A673 (cell line): ENCODE measurements at regions of chr11 and their contacts with region 1.

Region 1: DNA sequence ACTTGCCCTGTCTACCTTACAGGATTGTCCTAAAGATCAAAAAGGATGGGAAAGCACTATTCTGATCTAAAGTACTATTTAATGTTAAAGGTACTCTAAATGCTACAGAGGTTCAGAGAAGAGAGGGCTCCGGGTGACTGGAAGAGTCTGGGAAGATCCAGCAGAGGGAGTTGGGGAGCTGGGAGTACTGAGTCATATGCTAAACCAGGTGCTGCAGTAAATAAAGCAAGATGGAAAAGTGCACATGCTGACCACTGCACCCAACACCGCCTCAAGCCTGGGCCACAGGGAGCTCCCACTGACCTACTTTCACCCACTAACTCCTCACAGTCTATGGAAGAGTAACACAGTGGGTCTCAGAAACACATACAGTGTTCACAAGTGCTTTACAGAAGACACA is 49.3 kb downstream of the WT1 start:
- DNase-seq: peak; percentile 93
- H3K4me3 ChIP-seq: no peak overlapping the region
- H3K27ac ChIP-seq: peak overlapping the region; percentile 52
- H3K4me1 ChIP-seq: peaks cover 54% of the 10 kb centered on the region
- H3K27me3 ChIP-seq: no peaks in the 10 kb centered on the region
- CTCF ChIP-seq: peak; percentile 100

Region 2: GRCh38 chr11:32365192-32365591 is 20.8 kb before region 1 on chr11:
- CTCF ChIA-PET with region 1: interaction called, 16 read pairs
- POLR2A ChIA-PET with region 1: no interaction called
- intact Hi-C with region 1: no loop called
- DNase-seq: no peak
- H3K4me3 ChIP-seq: no peak overlapping the region
- H3K27ac ChIP-seq: no peak overlapping the region
- H3K4me1 ChIP-seq: no peaks in the 10 kb centered on the region
- H3K27me3 ChIP-seq: no peaks in the 10 kb centered on the region
- CTCF ChIP-seq: no peak

Region 3: DNA sequence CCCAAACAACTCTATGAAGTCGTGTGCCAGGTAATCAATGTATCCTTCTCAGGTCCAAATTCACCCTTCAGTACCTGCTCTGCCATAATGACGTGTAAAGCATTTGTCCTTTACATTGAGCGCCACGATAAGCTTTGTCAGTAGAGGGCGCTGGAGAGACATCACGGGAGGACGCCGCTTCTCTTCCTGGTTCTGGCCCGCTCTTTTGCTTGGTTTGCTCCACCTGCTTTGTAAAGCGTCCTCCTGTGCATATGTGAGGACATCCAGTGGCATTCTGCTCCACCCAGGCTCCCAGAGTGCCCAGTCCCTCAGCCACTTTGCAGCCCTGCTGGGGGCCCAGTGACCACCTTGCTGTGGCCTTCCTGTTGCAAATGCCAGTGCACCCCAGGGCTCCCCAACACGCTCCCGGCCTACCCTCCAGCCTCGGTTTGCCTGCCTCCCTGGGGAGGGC is 11.7 kb before region 1 on chr11:
- CTCF ChIA-PET with region 1: interaction called, 11 read pairs
- POLR2A ChIA-PET with region 1: interaction called, 3 read pairs
- intact Hi-C with region 1: no loop called
- DNase-seq: peak; percentile 98
- H3K4me3 ChIP-seq: no peak overlapping the region
- H3K27ac ChIP-seq: no peak overlapping the region
- H3K4me1 ChIP-seq: no peaks in the 10 kb centered on the region
- H3K27me3 ChIP-seq: no peaks in the 10 kb centered on the region
- CTCF ChIP-seq: peak; percentile 100; the same call in 1 of the 2 replicates

Region 4: DNA sequence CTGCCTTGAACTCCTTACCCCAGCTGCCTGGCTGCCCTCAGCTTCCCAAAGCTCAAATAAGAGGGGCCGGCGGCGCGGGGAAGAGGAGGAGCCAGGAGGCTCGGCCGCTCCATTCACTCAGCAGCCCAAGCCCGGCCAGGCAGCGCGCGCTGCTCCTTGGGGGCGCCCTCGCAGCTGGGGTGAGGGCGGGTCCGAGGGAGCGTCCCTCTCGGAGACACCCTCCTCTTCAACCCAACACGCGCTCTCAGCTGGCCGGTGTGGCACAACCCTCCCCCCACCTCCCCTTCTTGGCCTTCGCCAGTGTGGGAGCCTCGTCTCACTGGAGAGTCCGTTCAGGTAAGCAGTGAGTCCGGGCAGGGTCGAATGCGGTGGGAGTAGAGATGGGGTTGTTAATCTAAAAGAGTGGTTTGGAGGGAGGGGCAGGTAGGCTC is 49.5 kb after region 1 on chr11 and contains the start of gene WT1:
- CTCF ChIA-PET with region 1: interaction called, 12 read pairs
- POLR2A ChIA-PET with region 1: interaction called, 3 read pairs
- intact Hi-C with region 1: loop called (anchors 5 kb)
- DNase-seq: peak; percentile 86
- H3K4me3 ChIP-seq: peak within 1 kb of the TSS; percentile 41
- H3K27ac ChIP-seq: no peak within 1 kb of the TSS
- H3K4me1 ChIP-seq: peaks cover 48% of the 10 kb centered on the region
- H3K27me3 ChIP-seq: peaks cover 98% of the 10 kb centered on the region
- CTCF ChIP-seq: no peak
- total RNA-seq, gene WT1: 8.6 and 10.4 TPM in 2 replicates

Region 5: DNA sequence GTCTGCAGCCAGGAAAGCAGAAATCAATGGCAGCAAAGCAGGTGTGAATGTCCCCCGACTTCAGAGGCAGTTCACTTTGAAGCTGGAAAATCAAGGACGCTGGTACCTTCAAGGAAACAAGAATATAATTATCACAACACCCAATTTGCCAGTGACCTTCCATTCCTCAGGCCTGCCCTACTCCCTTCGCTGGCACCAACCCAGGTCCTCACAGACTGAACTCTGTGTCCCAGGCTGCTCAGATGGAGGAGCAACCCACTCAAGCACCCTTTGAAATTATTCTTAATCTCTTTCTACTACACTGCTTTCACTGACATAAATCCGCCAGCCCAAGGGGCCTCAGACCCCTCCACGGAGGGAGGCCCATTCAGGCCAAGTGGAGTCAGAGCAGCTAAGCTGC is 114.0 kb after region 1 on chr11:
- CTCF ChIA-PET with region 1: no interaction called
- POLR2A ChIA-PET with region 1: no interaction called
- intact Hi-C with region 1: no loop called
- DNase-seq: no peak
- H3K4me3 ChIP-seq: no peak overlapping the region
- H3K27ac ChIP-seq: no peak overlapping the region
- H3K4me1 ChIP-seq: no peaks in the 10 kb centered on the region
- H3K27me3 ChIP-seq: no peaks in the 10 kb centered on the region
- CTCF ChIP-seq: no peak

Region 6: DNA sequence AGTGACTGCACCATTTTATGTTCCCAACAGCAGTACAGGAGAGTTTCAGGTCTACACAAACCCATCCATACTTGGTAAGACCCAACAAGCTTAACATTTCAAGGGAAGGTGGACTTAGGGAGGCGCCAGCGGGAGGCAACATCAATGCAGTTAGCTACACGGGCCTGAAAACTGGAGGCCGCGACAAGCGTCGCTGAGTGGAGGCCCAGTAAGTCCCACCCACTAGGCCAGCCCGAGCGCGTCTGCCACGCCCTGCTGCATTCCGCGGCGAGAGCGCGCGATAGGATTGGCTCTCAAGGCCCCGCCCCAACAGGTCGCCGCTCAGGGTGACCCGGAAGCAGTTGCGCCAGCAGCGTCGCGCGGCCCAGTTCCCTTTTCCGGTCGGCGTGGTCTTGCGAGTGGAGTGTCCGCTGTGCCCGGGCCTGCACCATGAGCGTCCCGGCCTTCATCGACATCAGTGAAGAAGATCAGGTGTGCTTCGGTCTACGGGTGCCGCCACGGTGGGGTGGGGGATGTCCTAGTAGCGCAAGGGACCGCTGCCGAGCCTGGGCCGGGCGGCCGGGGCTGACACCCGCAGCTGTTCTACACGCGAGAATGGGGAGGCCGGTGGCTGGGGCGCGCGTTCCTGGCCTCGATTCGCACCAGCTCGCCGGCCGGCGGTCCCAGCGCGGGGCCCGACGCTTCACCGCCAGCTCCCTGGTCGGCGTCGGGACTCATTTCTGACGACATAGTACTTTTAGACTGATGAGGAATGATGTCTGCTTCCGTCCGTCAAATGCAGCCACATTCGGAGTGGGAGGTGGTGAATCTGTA is 197.7 kb after region 1 on chr11 and contains the start of gene EIF3M:
- CTCF ChIA-PET with region 1: interaction called, 5 read pairs
- POLR2A ChIA-PET with region 1: no interaction called
- intact Hi-C with region 1: loop called (anchors 5 kb)
- DNase-seq: peak; percentile 100
- H3K4me3 ChIP-seq: peak within 1 kb of the TSS; percentile 67
- H3K27ac ChIP-seq: peak within 1 kb of the TSS; percentile 91
- H3K4me1 ChIP-seq: peaks cover 33% of the 10 kb centered on the region
- H3K27me3 ChIP-seq: no peaks in the 10 kb centered on the region
- CTCF ChIP-seq: no peak
- total RNA-seq, gene EIF3M: 1,025 and 1,119 TPM in 2 replicates